ENCODE measurements at regions of chr4 and their contacts with region 1.

Region 1: GRCh38 chr4:185039508-185040273 is 21.4 kb downstream of the HELT start:
- DNase-seq: peak; percentile 70 to 75 (median 72)
- ATAC-seq: peak; percentile 90
- H3K4me3 ChIP-seq: no peak overlapping the region
- H3K27ac ChIP-seq: no peak overlapping the region
- H3K4me1 ChIP-seq: no peaks in the 10 kb centered on the region; a peak in 1 of 5 replicates
- H3K27me3 ChIP-seq: peaks cover 11 to 12% of the 10 kb centered on the region in 2 experiments
- CTCF ChIP-seq: peak; percentile 74 to 91 (median 78)
- EP300 ChIP-seq: no peak
- POLR2A ChIP-seq: no peak
- RAD21 ChIP-seq: peak; percentile 84 to 86

Region 2: DNA sequence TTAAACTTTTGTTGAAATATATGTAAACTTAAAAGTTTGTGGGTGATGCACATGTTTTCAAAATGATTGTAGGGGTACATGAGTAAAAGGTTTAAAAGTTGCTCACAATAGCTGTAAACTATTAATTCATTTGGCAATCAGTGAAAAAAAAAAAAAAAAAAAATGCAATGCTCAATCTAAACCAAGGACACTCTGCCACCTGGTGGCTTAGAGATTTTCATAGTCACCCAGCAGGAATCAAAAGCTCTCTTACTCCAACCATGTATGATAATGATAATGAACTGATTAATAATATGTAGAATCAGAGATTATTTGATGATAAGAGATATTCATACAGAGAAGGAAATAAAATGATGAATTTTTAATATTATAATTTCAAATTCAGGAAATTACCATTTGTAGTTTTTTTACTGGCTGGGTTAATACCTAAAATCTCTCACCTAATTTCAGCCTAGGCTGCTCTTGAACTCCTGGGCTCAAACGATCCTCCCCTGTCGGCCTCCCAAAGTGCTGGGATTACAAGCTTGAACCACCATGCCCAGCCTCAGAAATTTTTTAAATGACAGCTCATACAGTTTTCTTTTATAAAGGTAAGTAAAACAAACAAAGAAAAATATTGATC is 56.5 kb after region 1 on chr4:
- CTCF ChIA-PET with region 1: interaction called, 16 read pairs
- POLR2A ChIA-PET with region 1: no interaction called
- in situ Hi-C with region 1: no loop called
- intact Hi-C with region 1: loop called (anchors 1 kb)
- DNase-seq: peak in 3 of 4 experiments; percentile 21 to 59 (median 24)
- ATAC-seq: no peak
- H3K4me3 ChIP-seq: no peak overlapping the region
- H3K27ac ChIP-seq: no peak overlapping the region
- H3K4me1 ChIP-seq: peaks cover 0 to 3% of the 10 kb centered on the region in 2 experiments; a peak in 2 of 5 replicates
- H3K27me3 ChIP-seq: peaks cover 15 to 22% of the 10 kb centered on the region in 2 experiments
- CTCF ChIP-seq: peak; percentile 36 to 76 (median 48); a peak in 4 of 6 replicates
- EP300 ChIP-seq: no peak
- POLR2A ChIP-seq: no peak
- RAD21 ChIP-seq: peak; percentile 70 to 74

Region 3: DNA sequence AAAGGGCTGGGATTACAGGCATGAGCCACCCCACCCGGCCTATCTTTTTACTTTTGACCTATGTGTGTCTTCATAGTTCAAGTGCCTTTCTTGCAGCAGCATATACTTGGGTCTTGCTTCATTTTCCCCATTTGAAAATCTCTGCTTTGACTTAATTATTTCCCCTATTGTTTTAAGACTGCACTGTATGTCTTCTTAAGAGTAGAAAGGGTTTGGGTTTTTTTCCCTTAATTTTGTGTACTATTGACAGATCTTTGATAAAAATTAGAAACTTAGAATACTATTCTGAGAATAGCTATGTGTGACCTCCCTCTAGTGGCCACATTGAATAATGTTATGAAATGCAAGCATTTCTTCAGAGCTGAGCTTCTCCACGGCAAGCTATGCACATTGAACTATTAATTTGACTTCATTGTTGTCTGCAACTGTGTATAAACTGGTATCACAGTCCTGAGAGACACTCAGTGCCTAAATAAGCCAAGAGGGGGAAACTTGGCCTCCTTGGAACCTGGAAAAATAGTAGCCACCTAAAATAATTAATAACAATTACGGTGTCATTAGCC is 94.7 kb after region 1 on chr4:
- CTCF ChIA-PET with region 1: interaction called, 33 read pairs
- POLR2A ChIA-PET with region 1: interaction called, 4 read pairs
- in situ Hi-C with region 1: loop called (anchors 5 kb)
- intact Hi-C with region 1: loop called (anchors 1 kb)
- DNase-seq: peak; percentile 40 to 67 (median 46)
- ATAC-seq: peak; percentile 89
- H3K4me3 ChIP-seq: no peak overlapping the region
- H3K27ac ChIP-seq: no peak overlapping the region
- H3K4me1 ChIP-seq: peaks cover 0 to 3% of the 10 kb centered on the region in 2 experiments; a peak in 1 of 5 replicates
- H3K27me3 ChIP-seq: no peaks in the 10 kb centered on the region; a peak in 1 of 5 replicates
- CTCF ChIP-seq: peak; percentile 59 to 88 (median 71); a peak in 5 of 6 replicates
- EP300 ChIP-seq: no peak
- POLR2A ChIP-seq: no peak
- RAD21 ChIP-seq: peak; percentile 85 to 89

Region 4: DNA sequence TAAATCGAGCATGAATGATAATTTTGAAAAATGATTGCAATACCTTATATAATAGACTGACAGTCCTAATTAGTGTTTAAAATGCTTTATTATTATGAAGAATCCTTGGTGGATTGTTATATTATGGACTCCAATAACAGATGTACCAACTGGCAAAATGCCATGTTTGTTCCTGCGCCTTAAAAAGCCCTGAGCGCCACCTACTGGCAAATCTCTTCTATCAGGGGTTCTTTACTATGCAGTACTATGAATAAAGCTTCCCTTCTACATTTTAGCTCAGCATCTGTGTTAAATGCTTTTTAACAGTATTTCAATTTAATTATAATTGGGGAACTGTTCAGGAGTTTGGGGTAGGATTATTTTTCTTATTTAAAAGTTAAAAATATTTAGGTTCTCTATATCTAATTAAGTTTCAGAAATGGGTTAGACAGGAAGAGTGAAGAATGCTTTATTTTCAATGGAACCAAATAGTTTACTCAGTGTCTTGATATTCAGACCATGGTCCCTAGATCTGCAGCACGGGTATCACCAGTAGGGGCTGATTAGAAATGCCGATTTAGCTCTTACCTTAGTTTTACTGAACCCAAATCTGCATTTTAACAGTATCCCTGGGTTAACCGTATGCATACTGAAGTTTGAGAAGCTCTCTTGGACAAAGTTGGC is 144.1 kb after region 1 on chr4:
- CTCF ChIA-PET with region 1: interaction called, 4 read pairs
- POLR2A ChIA-PET with region 1: no interaction called
- in situ Hi-C with region 1: no loop called
- intact Hi-C with region 1: loop called (anchors 2 kb)
- DNase-seq: peak; percentile 65 to 90 (median 69)
- ATAC-seq: peak; percentile 89
- H3K4me3 ChIP-seq: no peak overlapping the region
- H3K27ac ChIP-seq: peak overlapping the region; percentile 9; the same call in 1 of the 3 replicates
- H3K4me1 ChIP-seq: no peaks in the 10 kb centered on the region; a peak in 1 of 5 replicates
- H3K27me3 ChIP-seq: no peaks in the 10 kb centered on the region
- CTCF ChIP-seq: peak; percentile 65 to 88 (median 75)
- EP300 ChIP-seq: no peak
- POLR2A ChIP-seq: no peak
- RAD21 ChIP-seq: peak; percentile 55 to 64

Region 5: GRCh38 chr4:185304944-185305690 is 265.4 kb after region 1 on chr4:
- CTCF ChIA-PET with region 1: no interaction called
- POLR2A ChIA-PET with region 1: no interaction called
- in situ Hi-C with region 1: no loop called
- intact Hi-C with region 1: loop called (anchors 10 kb)
- DNase-seq: peak in 1 of 4 experiments; percentile 52
- ATAC-seq: peak; percentile 92
- H3K4me3 ChIP-seq: no peak overlapping the region
- H3K27ac ChIP-seq: no peak overlapping the region
- H3K4me1 ChIP-seq: no peaks in the 10 kb centered on the region
- H3K27me3 ChIP-seq: no peaks in the 10 kb centered on the region
- CTCF ChIP-seq: peak; percentile 61 to 66 (median 66)
- EP300 ChIP-seq: no peak
- POLR2A ChIP-seq: no peak
- RAD21 ChIP-seq: peak; percentile 55 to 71

Region 6: GRCh38 chr4:186037692-186038658 is 998.3 kb after region 1 on chr4:
- CTCF ChIA-PET with region 1: interaction called, 3 read pairs
- POLR2A ChIA-PET with region 1: no interaction called
- in situ Hi-C with region 1: loop called (anchors 25 kb)
- intact Hi-C with region 1: no loop called
- DNase-seq: peak; percentile 53 to 74 (median 66)
- ATAC-seq: peak; percentile 81
- H3K4me3 ChIP-seq: no peak overlapping the region
- H3K27ac ChIP-seq: no peak overlapping the region
- H3K4me1 ChIP-seq: no peaks in the 10 kb centered on the region
- H3K27me3 ChIP-seq: peaks cover 0 to 15% of the 10 kb centered on the region in 2 experiments; a peak in 4 of 5 replicates
- CTCF ChIP-seq: peak; percentile 62 to 82 (median 64)
- EP300 ChIP-seq: no peak
- POLR2A ChIP-seq: no peak
- RAD21 ChIP-seq: peak; percentile 65 to 72

Measured in K562 (cell line).